ENCODE measurements at regions of chr20 and their contacts with region 1.

Region 1: DNA sequence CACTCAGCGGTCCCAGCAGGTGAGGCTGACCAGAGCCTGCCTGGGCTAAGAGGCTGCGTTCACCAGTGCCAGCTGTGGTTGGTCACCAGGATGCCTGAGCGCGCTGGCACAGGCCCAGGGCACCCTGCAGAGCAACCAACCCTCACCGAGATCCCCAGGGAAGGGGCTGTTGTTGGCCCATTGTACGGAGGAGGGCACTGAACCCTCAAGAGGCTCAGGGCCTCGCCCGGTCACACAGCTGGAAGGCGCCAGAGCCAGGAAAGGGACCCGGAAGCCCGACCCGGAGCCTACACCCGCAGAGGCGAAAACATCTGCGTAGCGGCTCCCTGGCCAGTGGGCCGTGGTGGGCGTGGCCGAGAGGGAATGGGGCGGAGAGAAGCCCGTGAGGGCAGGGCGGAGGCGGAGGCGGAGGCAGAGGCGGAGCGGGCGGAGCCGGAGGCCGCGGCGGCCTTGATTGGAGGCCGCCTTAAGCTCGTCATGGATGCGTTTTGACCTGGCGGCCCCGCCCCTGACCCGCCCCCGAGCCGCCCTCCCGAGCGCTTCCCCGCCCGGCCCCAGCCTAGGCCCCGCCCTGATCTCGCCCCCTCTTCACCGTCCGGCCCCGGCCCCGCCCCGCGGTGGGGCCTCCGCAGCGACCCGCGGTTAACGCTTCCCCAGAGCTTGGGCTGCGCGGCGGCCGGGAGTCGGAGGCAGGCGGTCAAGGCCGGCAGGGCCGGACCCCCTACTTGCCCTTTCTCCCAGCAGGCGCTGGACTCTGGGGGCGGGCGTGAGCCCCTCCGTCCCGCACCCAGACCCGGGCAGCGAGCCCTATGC is 2.2 kb upstream of the MRGBP start:
- DNase-seq: peak; percentile 98
- ATAC-seq: peak; percentile 78
- H3K4me3 ChIP-seq: peak overlapping the region; percentile 60 to 77 (median 69)
- H3K4me3 Mint-ChIP-seq: peak overlapping the region; percentile 77
- H3K27ac ChIP-seq: peak overlapping the region; percentile 91 to 93
- H3K27ac Mint-ChIP-seq: peak overlapping the region; percentile 64
- H3K4me1 ChIP-seq: peaks cover 14 to 45% of the 10 kb centered on the region in 2 donors
- H3K4me1 Mint-ChIP-seq: peaks cover 36% of the 10 kb centered on the region
- H3K27me3 ChIP-seq: no peaks in the 10 kb centered on the region
- H3K27me3 Mint-ChIP-seq: no peaks in the 10 kb centered on the region
- CTCF ChIP-seq: no peak

Region 2: GRCh38 chr20:62143118-62143973 is 650.8 kb before region 1 on chr20 and contains the starts of genes PSMA7 and SS18L1:
- CTCF ChIA-PET with region 1: no interaction called
- POLR2A ChIA-PET with region 1: no interaction called
- intact Hi-C with region 1: loop called (anchors 2 kb)
- DNase-seq: peak; percentile 94
- ATAC-seq: peak; percentile 90
- H3K4me3 ChIP-seq: peak within 1 kb of the TSS; percentile 54 to 88 (median 63)
- H3K4me3 Mint-ChIP-seq: peak within 1 kb of the TSS; percentile 91
- H3K27ac ChIP-seq: peak within 1 kb of the TSS; percentile 63 to 75
- H3K27ac Mint-ChIP-seq: peak within 1 kb of the TSS; percentile 92
- H3K4me1 ChIP-seq: peaks cover 24 to 29% of the 10 kb centered on the region in 2 donors
- H3K4me1 Mint-ChIP-seq: peaks cover 40% of the 10 kb centered on the region
- H3K27me3 ChIP-seq: no peaks in the 10 kb centered on the region
- H3K27me3 Mint-ChIP-seq: no peaks in the 10 kb centered on the region
- CTCF ChIP-seq: no peak
- total RNA-seq, gene PSMA7: 140 TPM in 2 replicates
- total RNA-seq, gene SS18L1: 20.7 and 22.0 TPM in 2 replicates

Region 3: GRCh38 chr20:62386383-62387218 is 407.5 kb before region 1 on chr20 and contains the start of gene RPS21:
- CTCF ChIA-PET with region 1: interaction called, 3 read pairs
- POLR2A ChIA-PET with region 1: interaction called, 5 read pairs
- intact Hi-C with region 1: loop called (anchors 5 kb)
- DNase-seq: peak; percentile 95
- ATAC-seq: peak; percentile 87
- H3K4me3 ChIP-seq: peak within 1 kb of the TSS; percentile 78 to 93 (median 91)
- H3K4me3 Mint-ChIP-seq: peak within 1 kb of the TSS; percentile 94
- H3K27ac ChIP-seq: peak within 1 kb of the TSS; percentile 88 to 89
- H3K27ac Mint-ChIP-seq: peak within 1 kb of the TSS; percentile 94
- H3K4me1 ChIP-seq: peaks cover 18 to 34% of the 10 kb centered on the region in 2 donors
- H3K4me1 Mint-ChIP-seq: peaks cover 48% of the 10 kb centered on the region
- H3K27me3 ChIP-seq: no peaks in the 10 kb centered on the region
- H3K27me3 Mint-ChIP-seq: no peaks in the 10 kb centered on the region
- CTCF ChIP-seq: no peak
- total RNA-seq, gene RPS21: 2,429 and 2,653 TPM in 2 replicates

Region 4: DNA sequence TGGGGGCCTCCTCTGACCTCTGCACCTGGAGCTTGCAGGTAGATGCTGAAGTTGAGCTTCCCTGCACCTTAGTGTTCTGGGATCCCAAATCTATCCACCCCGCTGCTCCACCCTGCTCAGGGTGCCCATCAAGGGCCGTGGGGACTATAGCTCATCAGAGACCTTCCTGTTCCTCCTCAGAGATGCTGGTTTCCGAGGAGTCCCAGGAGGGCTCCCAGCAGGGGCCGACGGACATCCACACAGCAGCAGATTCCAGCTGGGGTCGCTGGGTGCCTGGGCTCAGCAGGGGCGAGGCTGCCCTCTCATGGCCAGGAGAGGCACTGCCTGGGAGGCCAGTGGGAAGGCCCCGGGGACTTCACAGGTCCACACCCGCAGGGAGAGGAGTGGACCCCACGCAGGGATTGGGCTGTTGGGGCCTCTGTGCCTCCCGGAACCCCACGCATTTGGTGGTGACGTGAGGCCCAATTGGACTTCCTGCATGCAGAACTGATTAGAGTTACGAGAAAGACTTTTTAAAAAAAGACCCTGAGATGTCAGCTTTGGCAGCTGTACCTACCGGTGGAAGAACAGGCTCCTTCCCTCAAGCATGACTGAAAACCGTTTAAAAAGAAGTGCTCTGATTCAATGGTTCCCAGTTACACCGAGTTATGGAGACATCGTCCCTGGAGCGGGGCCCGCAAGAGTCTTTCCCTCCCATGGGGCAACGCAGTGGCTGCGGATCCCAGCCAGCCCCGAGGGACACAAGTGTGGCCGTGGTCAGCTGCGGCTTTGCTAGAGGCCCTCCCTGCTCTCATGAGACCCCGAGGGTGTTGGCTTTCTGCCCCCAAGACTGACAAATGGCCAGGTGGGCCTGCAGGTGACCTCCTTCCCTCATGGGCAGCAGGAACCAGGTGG is 177.1 kb before region 1 on chr20:
- CTCF ChIA-PET with region 1: interaction called, 16 read pairs
- POLR2A ChIA-PET with region 1: interaction called, 5 read pairs
- intact Hi-C with region 1: no loop called
- DNase-seq: peak; percentile 81
- ATAC-seq: peak; percentile 71
- H3K4me3 ChIP-seq: no peak overlapping the region
- H3K4me3 Mint-ChIP-seq: peak overlapping the region; percentile 83
- H3K27ac ChIP-seq: peak overlapping the region; percentile 54 to 73
- H3K27ac Mint-ChIP-seq: peak overlapping the region; percentile 94
- H3K4me1 ChIP-seq: peaks cover 31 to 33% of the 10 kb centered on the region in 2 donors
- H3K4me1 Mint-ChIP-seq: peaks cover 41% of the 10 kb centered on the region
- H3K27me3 ChIP-seq: no peaks in the 10 kb centered on the region
- H3K27me3 Mint-ChIP-seq: no peaks in the 10 kb centered on the region
- CTCF ChIP-seq: peak; percentile 92

Region 5: GRCh38 chr20:62668441-62669027 is 125.6 kb before region 1 on chr20:
- CTCF ChIA-PET with region 1: interaction called, 9 read pairs
- POLR2A ChIA-PET with region 1: no interaction called
- intact Hi-C with region 1: loop called (anchors 1 kb)
- DNase-seq: peak; percentile 56
- ATAC-seq: no peak
- H3K4me3 ChIP-seq: no peak overlapping the region
- H3K4me3 Mint-ChIP-seq: no peak overlapping the region
- H3K27ac ChIP-seq: no peak overlapping the region
- H3K27ac Mint-ChIP-seq: no peak overlapping the region
- H3K4me1 ChIP-seq: no peaks in the 10 kb centered on the region
- H3K4me1 Mint-ChIP-seq: no peaks in the 10 kb centered on the region
- H3K27me3 ChIP-seq: no peaks in the 10 kb centered on the region
- H3K27me3 Mint-ChIP-seq: no peaks in the 10 kb centered on the region
- CTCF ChIP-seq: peak; percentile 73

Region 6: GRCh38 chr20:62832212-62832922 is 38.2 kb after region 1 on chr20:
- CTCF ChIA-PET with region 1: interaction called, 4 read pairs
- POLR2A ChIA-PET with region 1: interaction called, 3 read pairs
- intact Hi-C with region 1: loop called (anchors 2 kb)
- DNase-seq: peak; percentile 89
- ATAC-seq: peak; percentile 91
- H3K4me3 ChIP-seq: peak overlapping the region; percentile 29 to 56 (median 43)
- H3K4me3 Mint-ChIP-seq: peak overlapping the region; percentile 77
- H3K27ac ChIP-seq: peak overlapping the region; percentile 38 to 59
- H3K27ac Mint-ChIP-seq: peak overlapping the region; percentile 89
- H3K4me1 ChIP-seq: peaks cover 27 to 33% of the 10 kb centered on the region in 2 donors
- H3K4me1 Mint-ChIP-seq: peaks cover 27% of the 10 kb centered on the region
- H3K27me3 ChIP-seq: no peaks in the 10 kb centered on the region
- H3K27me3 Mint-ChIP-seq: no peaks in the 10 kb centered on the region
- CTCF ChIP-seq: peak; percentile 11

Region 7: DNA sequence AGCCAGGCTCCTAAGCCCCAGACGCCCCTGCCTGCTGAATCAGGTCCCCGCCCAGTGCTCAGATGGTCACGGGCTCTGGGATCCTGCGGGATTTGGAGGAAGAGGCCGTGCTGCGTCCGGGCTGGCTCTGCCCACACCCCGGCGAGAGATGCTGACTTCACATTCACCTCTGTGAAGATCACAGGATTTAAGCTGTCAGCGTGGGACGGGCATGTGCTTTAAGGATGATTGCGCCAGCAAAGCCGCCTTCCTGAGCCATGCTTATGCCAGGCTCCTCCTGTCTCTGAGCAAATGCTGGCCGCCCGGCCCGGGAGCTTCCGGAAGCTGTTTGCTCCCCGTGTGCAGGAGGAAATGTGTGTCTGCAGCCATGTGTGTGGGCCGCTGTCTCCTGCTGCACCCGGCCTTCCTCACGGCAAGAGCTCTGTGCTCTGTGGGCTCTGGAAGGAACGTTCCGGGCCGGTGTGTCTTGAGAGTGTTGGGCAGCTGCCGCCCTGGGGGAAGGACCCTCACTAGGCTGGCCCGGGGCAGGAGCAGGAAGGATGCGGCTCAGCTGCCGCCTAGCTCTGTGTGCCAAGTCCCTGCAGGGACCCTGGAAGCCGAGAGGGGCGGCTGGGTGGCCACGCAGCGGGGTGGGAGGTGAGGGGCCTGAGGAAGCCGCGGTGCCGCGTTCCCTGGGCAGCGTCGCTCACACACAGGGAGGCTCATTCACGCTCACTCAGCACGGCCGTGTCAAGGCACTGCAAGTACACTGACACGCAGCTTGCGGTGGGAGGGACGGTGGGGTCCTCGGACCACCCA is 231.6 kb after region 1 on chr20:
- CTCF ChIA-PET with region 1: no interaction called
- POLR2A ChIA-PET with region 1: no interaction called
- intact Hi-C with region 1: no loop called
- DNase-seq: no peak
- ATAC-seq: no peak
- H3K4me3 ChIP-seq: no peak overlapping the region
- H3K4me3 Mint-ChIP-seq: no peak overlapping the region
- H3K27ac ChIP-seq: no peak overlapping the region
- H3K27ac Mint-ChIP-seq: no peak overlapping the region
- H3K4me1 ChIP-seq: peaks cover 7 to 8% of the 10 kb centered on the region in 2 donors
- H3K4me1 Mint-ChIP-seq: no peaks in the 10 kb centered on the region
- H3K27me3 ChIP-seq: peaks cover 0 to 61% (median 20%) of the 10 kb centered on the region in 4 experiments
- H3K27me3 Mint-ChIP-seq: peaks cover 47% of the 10 kb centered on the region
- CTCF ChIP-seq: no peak

Measured in B cell (primary cell).